Activated naive CD4-positive, alpha-beta T cell treated with anti-CD3 and anti-CD28 coated beads for 36 hours (primary cell): ENCODE measurements at regions of chr22 and their contacts with region 1.

Region 1: DNA sequence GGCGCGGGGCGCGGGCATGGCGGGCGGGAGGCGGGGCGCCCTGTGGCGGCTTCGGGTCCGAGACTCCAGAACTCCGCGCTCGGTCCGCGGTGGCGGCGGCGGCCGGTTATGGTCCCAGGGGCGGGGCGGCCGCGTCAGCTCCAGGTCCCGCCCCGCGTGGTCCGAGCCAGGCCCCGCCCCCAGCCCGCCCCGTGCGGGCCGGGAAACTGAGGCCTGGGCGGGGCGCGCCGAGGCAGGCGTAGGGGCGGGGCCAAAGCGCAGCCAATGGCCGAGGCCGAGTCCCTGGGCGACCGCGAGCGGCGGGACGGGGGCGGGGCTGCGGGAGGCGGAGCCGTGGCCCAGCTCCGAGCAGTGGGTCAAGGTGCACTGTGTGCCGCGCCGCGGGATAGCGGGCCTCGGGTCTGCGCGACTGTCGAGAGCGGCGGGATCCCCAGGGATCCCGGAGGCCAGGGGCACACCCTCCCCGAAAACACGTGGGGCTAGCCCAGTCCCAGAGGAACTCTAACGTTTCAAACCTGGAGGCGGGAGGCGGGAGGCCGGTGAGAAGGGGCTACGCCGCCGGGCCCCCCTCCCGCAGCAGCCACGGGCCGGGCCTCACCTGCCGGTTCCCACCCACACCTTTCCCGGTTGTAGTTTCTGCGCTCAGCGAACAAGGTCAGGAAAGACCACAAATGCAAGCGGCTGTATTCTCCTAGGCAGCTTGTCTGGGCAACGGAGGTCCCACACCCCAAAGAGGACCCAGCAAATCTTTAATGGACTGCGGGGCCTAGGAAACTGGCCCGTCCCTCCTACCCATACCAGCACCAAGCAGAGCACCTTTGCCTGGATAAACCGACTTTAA is at the start of gene SLC25A1:
- DNase-seq: peak; percentile 85
- H3K4me3 Mint-ChIP-seq: peak within 1 kb of the TSS; percentile 75
- H3K27ac Mint-ChIP-seq: peak within 1 kb of the TSS; percentile 53
- H3K4me1 Mint-ChIP-seq: peaks cover 31% of the 10 kb centered on the region
- H3K27me3 Mint-ChIP-seq: no peaks in the 10 kb centered on the region
- total RNA-seq, gene SLC25A1: 54.0 to 58.4 TPM

Region 2: DNA sequence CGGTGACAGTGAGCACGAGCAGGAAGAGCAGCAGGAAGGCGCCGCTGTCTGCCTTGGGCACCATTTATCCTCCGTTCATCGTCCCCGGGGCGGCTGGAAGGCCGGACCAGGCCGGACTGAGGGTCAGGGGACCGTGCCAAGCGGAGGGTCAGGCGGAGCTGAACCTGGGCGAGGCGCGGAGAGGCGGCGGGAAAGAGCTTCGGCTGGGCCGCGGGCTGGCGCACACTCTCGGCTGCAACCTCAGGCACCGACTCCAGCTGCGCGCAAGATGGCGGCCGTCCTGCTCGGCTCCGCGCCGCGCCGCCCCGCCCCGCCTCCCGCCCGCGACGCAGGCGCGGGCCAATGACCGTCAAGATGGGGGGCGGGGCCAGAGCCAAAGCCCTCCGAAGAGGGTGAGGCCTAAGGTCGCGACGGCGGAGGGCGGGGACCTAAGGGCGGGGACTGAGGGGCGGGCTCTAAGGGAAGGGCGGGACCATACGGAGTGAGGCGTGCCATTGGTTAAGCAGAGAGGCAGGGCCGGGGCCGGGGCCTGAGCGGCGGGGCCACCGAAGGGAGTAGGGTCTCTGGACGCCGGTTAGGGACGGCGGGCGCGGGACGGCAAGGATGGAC is 56.6 kb before region 1 on chr22 and contains the start of gene DGCR2:
- CTCF ChIA-PET with region 1: no interaction called
- intact Hi-C with region 1: loop called (anchors 2 kb)
- DNase-seq: peak; percentile 98
- H3K4me3 Mint-ChIP-seq: peak within 1 kb of the TSS; percentile 84
- H3K27ac Mint-ChIP-seq: peak within 1 kb of the TSS; percentile 66
- H3K4me1 Mint-ChIP-seq: peaks cover 47% of the 10 kb centered on the region
- H3K27me3 Mint-ChIP-seq: no peaks in the 10 kb centered on the region
- total RNA-seq, gene DGCR2: 15.4 to 16.4 TPM

Region 3: DNA sequence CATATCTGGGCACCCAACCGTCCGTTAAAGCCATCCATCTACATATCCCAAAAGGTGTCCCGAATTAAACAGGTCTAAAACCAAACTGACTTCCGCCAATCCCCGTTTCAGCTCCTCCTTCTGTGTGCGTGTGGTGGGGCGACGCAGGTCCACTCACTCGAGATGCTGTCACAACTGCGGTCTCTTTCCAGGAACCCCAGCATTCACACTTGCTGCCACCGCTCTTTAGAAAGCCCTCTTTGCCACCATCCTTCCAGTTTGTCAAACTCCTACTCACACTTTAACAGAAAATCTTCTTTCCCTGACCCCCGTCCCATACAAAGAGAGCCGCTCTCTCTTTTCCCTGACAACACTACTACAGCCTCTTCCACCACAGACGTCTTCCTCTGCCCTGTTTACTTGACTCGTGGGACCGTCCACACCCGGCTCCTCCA is 34.9 kb before region 1 on chr22:
- CTCF ChIA-PET with region 1: interaction called, 5 read pairs
- intact Hi-C with region 1: loop called (anchors 2 kb)
- DNase-seq: peak; percentile 50
- H3K4me3 Mint-ChIP-seq: peak overlapping the region; percentile 99
- H3K27ac Mint-ChIP-seq: peak overlapping the region; percentile 91
- H3K4me1 Mint-ChIP-seq: peaks cover 19% of the 10 kb centered on the region
- H3K27me3 Mint-ChIP-seq: peaks cover 13% of the 10 kb centered on the region

Region 4: GRCh38 chr22:19291580-19292457 is 112.9 kb after region 1 on chr22 and contains the start of gene CLTCL1:
- CTCF ChIA-PET with region 1: no interaction called
- intact Hi-C with region 1: loop called (anchors 1 kb)
- DNase-seq: peak; percentile 69
- H3K4me3 Mint-ChIP-seq: peak within 1 kb of the TSS; percentile 87
- H3K27ac Mint-ChIP-seq: peak within 1 kb of the TSS; percentile 73
- H3K4me1 Mint-ChIP-seq: peaks cover 13% of the 10 kb centered on the region
- H3K27me3 Mint-ChIP-seq: peaks cover 15% of the 10 kb centered on the region
- total RNA-seq, gene CLTCL1: 0.57 to 1.0 TPM

Region 5: DNA sequence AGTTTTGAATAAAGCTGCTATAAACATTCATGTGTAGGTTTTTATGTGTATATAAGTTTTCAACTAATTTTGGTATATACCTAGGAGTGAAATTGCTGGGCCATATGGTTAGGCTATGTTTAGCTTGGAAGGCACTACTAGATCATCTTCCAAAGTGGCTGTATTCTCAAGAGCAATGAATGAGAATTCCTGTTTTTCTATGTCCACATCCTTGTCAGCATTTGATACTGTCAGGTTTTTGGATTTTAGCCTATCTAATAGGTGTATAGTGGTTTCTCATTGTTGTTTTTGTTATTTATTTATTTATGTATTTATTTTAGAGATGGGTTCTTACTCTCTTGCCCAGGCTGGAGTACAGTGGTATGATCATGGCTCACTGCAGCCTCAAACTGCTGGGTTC is 139.0 kb after region 1 on chr22:
- CTCF ChIA-PET with region 1: no interaction called
- intact Hi-C with region 1: no loop called
- DNase-seq: no peak
- H3K4me3 Mint-ChIP-seq: no peak overlapping the region
- H3K27ac Mint-ChIP-seq: no peak overlapping the region
- H3K4me1 Mint-ChIP-seq: no peaks in the 10 kb centered on the region
- H3K27me3 Mint-ChIP-seq: no peaks in the 10 kb centered on the region

Region 6: DNA sequence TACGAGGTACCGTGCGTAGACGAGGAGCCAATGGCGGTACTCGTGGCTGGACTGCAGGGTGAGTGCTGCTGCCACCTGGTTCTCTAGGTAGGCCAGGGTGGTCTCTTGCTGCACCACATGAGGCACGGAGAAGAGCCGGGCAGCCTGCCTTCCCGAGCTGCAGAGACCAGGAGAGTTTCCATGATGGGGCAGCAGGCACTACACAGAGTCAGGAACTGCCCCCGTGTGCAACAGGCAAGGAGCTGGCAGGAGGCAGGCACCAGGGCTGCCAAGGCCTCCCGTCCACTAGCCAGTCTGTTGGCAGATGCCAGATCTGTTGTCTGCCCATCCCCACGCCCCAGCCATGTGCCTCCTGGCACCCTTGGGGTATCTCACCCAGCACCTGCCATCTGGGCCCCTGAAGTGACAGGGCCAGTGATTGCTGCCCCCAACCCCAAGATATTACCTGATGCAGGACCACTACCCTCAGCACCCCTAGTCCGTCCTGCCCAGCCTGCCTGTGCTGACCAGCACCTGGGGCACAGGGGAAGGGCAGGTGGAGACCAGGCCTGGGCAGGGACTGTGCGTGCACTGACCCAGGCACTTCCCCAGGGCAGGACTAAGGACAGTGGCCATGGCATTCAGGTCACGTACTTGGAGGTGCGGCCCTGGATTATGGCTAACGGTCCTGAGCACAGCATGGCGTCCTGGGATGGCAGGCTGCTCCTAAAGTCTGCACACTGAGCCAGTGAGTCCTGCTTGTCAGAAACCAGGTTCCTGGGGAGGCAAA is 174.7 kb after region 1 on chr22:
- CTCF ChIA-PET with region 1: no interaction called
- intact Hi-C with region 1: no loop called
- DNase-seq: no peak
- H3K4me3 Mint-ChIP-seq: no peak overlapping the region
- H3K27ac Mint-ChIP-seq: no peak overlapping the region
- H3K4me1 Mint-ChIP-seq: no peaks in the 10 kb centered on the region
- H3K27me3 Mint-ChIP-seq: no peaks in the 10 kb centered on the region

Region 7: GRCh38 chr22:19717691-19718455 is 539.0 kb after region 1 on chr22:
- CTCF ChIA-PET with region 1: no interaction called
- intact Hi-C with region 1: loop called (anchors 1 kb)
- DNase-seq: peak; percentile 77
- H3K4me3 Mint-ChIP-seq: peak overlapping the region; percentile 70
- H3K27ac Mint-ChIP-seq: no peak overlapping the region
- H3K4me1 Mint-ChIP-seq: peaks cover 9% of the 10 kb centered on the region
- H3K27me3 Mint-ChIP-seq: peaks cover 41% of the 10 kb centered on the region